Adrenal gland (tissue), 19 donors: ENCODE measurements at regions of chr1 and their contacts with region 1.

Region 1: GRCh38 chr1:156060937-156061636 is at the start of gene RAB25:
- DNase-seq: no peak
- H3K4me3 ChIP-seq: no peak within 1 kb of the TSS
- H3K27ac ChIP-seq: no peak within 1 kb of the TSS
- H3K4me1 ChIP-seq: peaks cover 0 to 4% of the 10 kb centered on the region in 2 donors
- H3K27me3 ChIP-seq: no peaks in the 10 kb centered on the region
- CTCF ChIP-seq: no peak
- POLR2A ChIP-seq: peak in 1 of 2 donors; percentile 2
- total RNA-seq, gene RAB25: 0.38 TPM in 1 of 9 donors, not detected in the others

Region 2: DNA sequence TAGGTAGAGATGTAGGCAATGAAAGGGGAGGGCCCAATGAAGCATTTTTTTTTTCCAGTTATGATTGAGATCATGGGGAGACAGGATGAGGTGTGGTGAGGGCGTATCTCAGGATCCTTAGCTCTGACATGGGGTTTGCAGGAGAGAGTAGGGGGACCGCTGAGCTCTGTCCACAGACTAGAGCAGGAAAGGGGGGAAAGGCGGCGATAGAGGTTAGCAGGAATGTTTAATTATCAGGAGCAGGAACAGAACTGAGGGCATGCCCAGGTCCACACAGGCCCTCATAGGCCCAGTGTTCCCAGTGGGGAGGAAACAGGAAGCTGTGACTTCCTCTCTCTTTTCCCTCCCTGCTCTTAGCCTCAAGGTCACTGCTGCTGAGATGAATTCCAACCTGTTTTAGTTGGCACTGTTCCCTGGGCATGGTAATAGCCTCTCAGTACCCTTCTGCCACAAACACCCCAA is 120.5 kb before region 1 on chr1:
- intact Hi-C with region 1: loop called (anchors 5 to 10 kb)
- DNase-seq: peak; percentile 61 to 80 (median 71)
- H3K4me3 ChIP-seq: no peak overlapping the region
- H3K27ac ChIP-seq: peak overlapping the region in 4 of 5 donors; percentile 29 to 86 (median 55)
- H3K4me1 ChIP-seq: peaks cover 19 to 35% of the 10 kb centered on the region in 2 donors
- H3K27me3 ChIP-seq: no peaks in the 10 kb centered on the region
- CTCF ChIP-seq: no peak
- POLR2A ChIP-seq: no peak

Region 3: DNA sequence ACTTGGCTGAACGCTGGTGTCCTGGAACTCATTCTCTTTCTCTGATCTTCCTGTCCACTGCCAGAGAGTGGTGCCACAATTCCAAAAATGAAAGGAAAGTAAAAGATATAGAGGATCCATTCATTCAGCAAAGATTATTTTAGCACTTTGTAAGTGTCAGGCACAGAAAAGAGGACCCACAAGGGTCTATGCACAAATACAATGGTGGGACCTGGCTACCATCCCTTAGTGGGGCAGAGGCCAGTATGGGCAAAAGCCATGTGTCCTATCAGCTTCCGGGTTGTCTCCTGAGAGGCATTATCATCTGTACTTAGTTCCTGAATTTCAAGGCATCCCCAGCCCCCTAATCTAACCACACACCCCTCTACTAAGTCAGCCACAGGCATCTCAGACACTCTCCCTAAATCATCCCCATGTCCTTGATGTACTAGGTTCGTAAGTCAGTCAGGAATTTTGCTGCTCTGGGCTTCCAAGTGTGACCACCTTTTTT is 59.4 kb before region 1 on chr1:
- intact Hi-C with region 1: loop called in 1 of 2 experiments (anchors 10 kb)
- DNase-seq: no peak
- H3K4me3 ChIP-seq: no peak overlapping the region
- H3K27ac ChIP-seq: peak overlapping the region in 1 of 5 donors; percentile 5
- H3K4me1 ChIP-seq: peaks cover 0 to 14% of the 10 kb centered on the region in 2 donors
- H3K27me3 ChIP-seq: no peaks in the 10 kb centered on the region
- CTCF ChIP-seq: peak in 1 of 6 experiments; percentile 14
- POLR2A ChIP-seq: no peak